ENCODE measurements at regions of chr11 and their contacts with region 1.

Region 1: DNA sequence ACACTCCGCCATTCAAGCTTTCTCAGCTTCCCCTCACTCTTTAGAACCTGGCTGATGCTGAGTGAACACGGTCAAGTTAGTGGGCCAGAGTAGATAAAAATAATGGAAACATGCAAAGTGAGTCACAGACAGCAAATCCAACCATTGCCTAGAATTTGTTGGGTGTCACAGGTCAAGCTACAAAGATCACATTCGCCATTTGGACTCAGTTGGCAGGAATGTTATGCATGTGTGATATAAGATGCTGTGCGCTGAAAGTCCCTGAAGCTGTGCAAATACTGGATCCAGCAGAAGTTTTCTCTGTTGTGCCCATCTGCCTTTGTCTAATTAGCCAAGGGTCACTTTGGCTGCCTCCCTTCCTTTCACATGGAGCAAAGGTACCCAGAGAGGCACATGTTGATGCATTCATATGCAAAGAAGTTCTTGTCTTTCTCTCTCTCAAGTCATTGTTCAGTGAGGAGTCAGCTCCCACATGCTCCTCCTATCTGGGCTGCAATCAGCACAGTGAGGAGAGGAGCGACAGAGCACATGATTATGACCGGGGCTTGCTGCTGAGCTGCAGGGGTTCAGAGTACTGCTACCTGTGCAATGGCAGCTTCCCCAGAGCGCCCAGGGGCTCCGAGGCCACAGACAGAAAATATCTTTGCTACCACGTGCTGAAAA is 39.7 kb downstream of the FLI1 start:
- DNase-seq: peak in 2 of 5 donors; percentile 30 to 70
- H3K4me3 ChIP-seq: peak overlapping the region; percentile 8 to 32
- H3K4me3 Mint-ChIP-seq: peak overlapping the region; percentile 74 to 94 (median 84)
- H3K27ac ChIP-seq: peak overlapping the region; percentile 27
- H3K27ac Mint-ChIP-seq: peak overlapping the region; percentile 80 to 97 (median 88)
- H3K4me1 ChIP-seq: peaks cover 100% of the 10 kb centered on the region
- H3K4me1 Mint-ChIP-seq: peaks cover 82 to 100% (median 94%) of the 10 kb centered on the region in 4 donors
- H3K27me3 ChIP-seq: no peaks in the 10 kb centered on the region
- H3K27me3 Mint-ChIP-seq: no peaks in the 10 kb centered on the region

Region 2: GRCh38 chr11:128643661-128644317 is 89.8 kb before region 1 on chr11:
- CTCF ChIA-PET with region 1: no interaction called
- POLR2A ChIA-PET with region 1: no interaction called
- intact Hi-C with region 1: loop called (anchors 5 kb)
- DNase-seq: no peak
- H3K4me3 ChIP-seq: no peak overlapping the region
- H3K4me3 Mint-ChIP-seq: no peak overlapping the region
- H3K27ac ChIP-seq: no peak overlapping the region
- H3K27ac Mint-ChIP-seq: no peak overlapping the region
- H3K4me1 ChIP-seq: no peaks in the 10 kb centered on the region
- H3K4me1 Mint-ChIP-seq: peaks cover 7 to 19% (median 11%) of the 10 kb centered on the region in 4 donors
- H3K27me3 ChIP-seq: no peaks in the 10 kb centered on the region
- H3K27me3 Mint-ChIP-seq: no peaks in the 10 kb centered on the region

Region 3: GRCh38 chr11:128662960-128663359 is 70.6 kb before region 1 on chr11:
- CTCF ChIA-PET with region 1: no interaction called
- POLR2A ChIA-PET with region 1: no interaction called
- intact Hi-C with region 1: no loop called
- DNase-seq: no peak
- H3K4me3 ChIP-seq: no peak overlapping the region
- H3K4me3 Mint-ChIP-seq: no peak overlapping the region
- H3K27ac ChIP-seq: no peak overlapping the region
- H3K27ac Mint-ChIP-seq: peak overlapping the region in 1 of 7 donors; percentile 37
- H3K4me1 ChIP-seq: no peaks in the 10 kb centered on the region
- H3K4me1 Mint-ChIP-seq: peaks cover 2 to 7% (median 5%) of the 10 kb centered on the region in 4 donors
- H3K27me3 ChIP-seq: no peaks in the 10 kb centered on the region
- H3K27me3 Mint-ChIP-seq: peaks cover 11 to 13% of the 10 kb centered on the region in 2 donors

Region 4: GRCh38 chr11:128720522-128720985 is 13.0 kb before region 1 on chr11:
- CTCF ChIA-PET with region 1: interaction called, 13 read pairs
- POLR2A ChIA-PET with region 1: interaction called, 373 read pairs
- intact Hi-C with region 1: loop called (anchors 1 kb)
- DNase-seq: peak; percentile 49 to 66 (median 52)
- H3K4me3 ChIP-seq: peak overlapping the region in 1 of 2 donors; percentile 11
- H3K4me3 Mint-ChIP-seq: peak overlapping the region; percentile 80 to 94 (median 84)
- H3K27ac ChIP-seq: peak overlapping the region; percentile 47
- H3K27ac Mint-ChIP-seq: peak overlapping the region; percentile 91 to 98 (median 94)
- H3K4me1 ChIP-seq: peaks cover 100% of the 10 kb centered on the region
- H3K4me1 Mint-ChIP-seq: peaks cover 89 to 100% (median 97%) of the 10 kb centered on the region in 4 donors
- H3K27me3 ChIP-seq: no peaks in the 10 kb centered on the region
- H3K27me3 Mint-ChIP-seq: peaks cover 0 to 2% of the 10 kb centered on the region in 2 donors

Measured in CD4-positive, alpha-beta memory T cell (primary cell).